CD8-positive, alpha-beta T cell (primary cell): ENCODE measurements at regions of chr19 and their contacts with region 1.

Region 1: GRCh38 chr19:44689056-44689895 is 9.7 kb upstream of the CEACAM16 start:
- DNase-seq: peak; percentile 64 to 87 (median 81)
- ATAC-seq: peak; percentile 59
- H3K4me3 ChIP-seq: no peak overlapping the region
- H3K4me3 Mint-ChIP-seq: no peak overlapping the region
- H3K27ac ChIP-seq: no peak overlapping the region
- H3K27ac Mint-ChIP-seq: no peak overlapping the region
- H3K4me1 ChIP-seq: peaks cover 25% of the 10 kb centered on the region
- H3K4me1 Mint-ChIP-seq: peaks cover 22% of the 10 kb centered on the region
- H3K27me3 ChIP-seq: peaks cover 0 to 4% of the 10 kb centered on the region in 2 experiments
- H3K27me3 Mint-ChIP-seq: peaks cover 16% of the 10 kb centered on the region
- CTCF ChIP-seq: peak; percentile 81

Region 2: GRCh38 chr19:44570984-44571684 is 118.1 kb before region 1 on chr19:
- CTCF ChIA-PET with region 1: no interaction called
- POLR2A ChIA-PET with region 1: no interaction called
- intact Hi-C with region 1: no loop called
- DNase-seq: peak in 8 of 9 experiments; percentile 4 to 66 (median 45)
- ATAC-seq: no peak
- H3K4me3 ChIP-seq: no peak overlapping the region
- H3K4me3 Mint-ChIP-seq: no peak overlapping the region
- H3K27ac ChIP-seq: no peak overlapping the region
- H3K27ac Mint-ChIP-seq: no peak overlapping the region
- H3K4me1 ChIP-seq: no peaks in the 10 kb centered on the region
- H3K4me1 Mint-ChIP-seq: no peaks in the 10 kb centered on the region
- H3K27me3 ChIP-seq: no peaks in the 10 kb centered on the region
- H3K27me3 Mint-ChIP-seq: peaks cover 20% of the 10 kb centered on the region
- CTCF ChIP-seq: peak; percentile 57

Region 3: GRCh38 chr19:44607049-44607448 is 82.2 kb before region 1 on chr19:
- CTCF ChIA-PET with region 1: no interaction called
- POLR2A ChIA-PET with region 1: no interaction called
- intact Hi-C with region 1: no loop called
- DNase-seq: peak in 2 of 9 experiments; percentile 2 to 25
- ATAC-seq: no peak
- H3K4me3 ChIP-seq: no peak overlapping the region
- H3K4me3 Mint-ChIP-seq: peak overlapping the region; percentile 59
- H3K27ac ChIP-seq: no peak overlapping the region
- H3K27ac Mint-ChIP-seq: peak overlapping the region; percentile 61
- H3K4me1 ChIP-seq: peaks cover 16% of the 10 kb centered on the region
- H3K4me1 Mint-ChIP-seq: peaks cover 12% of the 10 kb centered on the region
- H3K27me3 ChIP-seq: peaks cover 0 to 2% of the 10 kb centered on the region in 2 experiments
- H3K27me3 Mint-ChIP-seq: peaks cover 2% of the 10 kb centered on the region
- CTCF ChIP-seq: no peak

Region 4: GRCh38 chr19:44714597-44715169 is 25.4 kb after region 1 on chr19:
- CTCF ChIA-PET with region 1: interaction called, 10 read pairs
- POLR2A ChIA-PET with region 1: no interaction called
- intact Hi-C with region 1: no loop called
- DNase-seq: no peak
- ATAC-seq: no peak
- H3K4me3 ChIP-seq: no peak overlapping the region
- H3K4me3 Mint-ChIP-seq: no peak overlapping the region
- H3K27ac ChIP-seq: no peak overlapping the region
- H3K27ac Mint-ChIP-seq: no peak overlapping the region
- H3K4me1 ChIP-seq: no peaks in the 10 kb centered on the region
- H3K4me1 Mint-ChIP-seq: peaks cover 6% of the 10 kb centered on the region
- H3K27me3 ChIP-seq: no peaks in the 10 kb centered on the region
- H3K27me3 Mint-ChIP-seq: no peaks in the 10 kb centered on the region
- CTCF ChIP-seq: no peak

Region 5: DNA sequence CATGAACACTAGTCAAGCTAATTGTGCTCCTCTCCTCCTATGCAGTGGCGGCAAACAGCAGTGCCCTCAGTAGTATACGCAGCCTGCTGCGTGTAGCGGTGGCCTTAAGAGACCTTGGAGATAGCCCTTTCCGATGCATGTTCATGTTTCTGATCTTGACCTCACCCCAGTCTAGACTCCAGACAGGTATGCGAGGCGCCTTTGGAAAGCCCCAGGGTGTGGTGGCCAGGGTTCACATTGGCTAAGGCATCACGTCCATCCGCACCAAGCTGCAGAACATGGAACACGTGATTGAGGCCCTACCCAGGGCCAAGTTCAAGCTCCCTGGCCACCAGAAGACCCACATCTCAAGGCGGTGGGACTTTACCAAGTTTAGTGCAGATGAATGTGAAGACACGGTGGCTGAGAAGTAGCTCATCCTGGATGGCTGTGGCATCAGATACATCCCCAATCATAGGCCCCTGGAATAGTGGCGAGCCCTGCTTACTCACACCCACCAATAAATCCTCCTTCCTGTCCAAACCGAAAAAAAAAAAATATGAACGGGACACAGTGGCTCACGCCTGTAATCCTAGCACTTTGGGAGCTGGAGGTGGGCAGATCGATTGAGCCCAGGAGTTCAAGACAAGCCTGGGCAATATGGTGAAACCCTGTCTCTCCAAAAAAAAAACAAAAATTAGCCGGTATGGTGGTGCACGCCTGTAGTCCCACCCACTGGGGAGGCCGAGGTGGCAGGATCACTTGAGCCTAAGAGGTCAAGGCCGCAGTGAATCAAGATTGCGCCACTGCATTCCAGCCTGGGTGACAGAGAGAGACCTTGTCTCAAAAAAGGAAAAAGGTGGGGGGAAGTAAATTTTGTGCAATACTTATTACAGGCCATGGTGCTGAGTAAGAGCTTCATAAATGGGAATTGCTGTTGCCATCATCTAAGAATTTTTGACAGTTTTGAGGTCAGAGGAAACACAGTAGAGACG is 76.0 kb after region 1 on chr19:
- CTCF ChIA-PET with region 1: interaction called, 72 read pairs
- POLR2A ChIA-PET with region 1: interaction called, 3 read pairs
- intact Hi-C with region 1: loop called (anchors 1 kb)
- DNase-seq: no peak
- ATAC-seq: no peak
- H3K4me3 ChIP-seq: no peak overlapping the region
- H3K4me3 Mint-ChIP-seq: no peak overlapping the region
- H3K27ac ChIP-seq: no peak overlapping the region
- H3K27ac Mint-ChIP-seq: no peak overlapping the region
- H3K4me1 ChIP-seq: peaks cover 32% of the 10 kb centered on the region
- H3K4me1 Mint-ChIP-seq: peaks cover 44% of the 10 kb centered on the region
- H3K27me3 ChIP-seq: no peaks in the 10 kb centered on the region
- H3K27me3 Mint-ChIP-seq: no peaks in the 10 kb centered on the region
- CTCF ChIP-seq: no peak